Activated T-helper 2 cell treated with anti-CD3 and anti-CD28 coated beads, Interferon-gamma antibody, Interleukin-2, Interleukin-4, amounts not matched to agents 10 μg/mL and 5 μg/mL and 100 μg/mL, durations not matched to agents 14 hours and 24 hours and 36 hours (primary cell): ENCODE measurements at regions of chr14 and their contacts with region 1.

Region 1: GRCh38 chr14:53152890-53153701 is at the start of gene DDHD1:
- DNase-seq: peak; percentile 82
- H3K4me3 Mint-ChIP-seq: peak within 1 kb of the TSS; percentile 99
- H3K27ac Mint-ChIP-seq: peak within 1 kb of the TSS; percentile 100
- H3K4me1 Mint-ChIP-seq: peaks cover 45% of the 10 kb centered on the region
- H3K27me3 Mint-ChIP-seq: no peaks in the 10 kb centered on the region
- total RNA-seq, gene DDHD1: 53.7 and 54.6 TPM in 2 replicates

Region 2: GRCh38 chr14:53055003-53055402 is 98.1 kb before region 1 on chr14:
- intact Hi-C with region 1: loop called (anchors 5 kb)
- DNase-seq: no peak
- H3K4me3 Mint-ChIP-seq: no peak overlapping the region
- H3K27ac Mint-ChIP-seq: no peak overlapping the region
- H3K4me1 Mint-ChIP-seq: peaks cover 9% of the 10 kb centered on the region
- H3K27me3 Mint-ChIP-seq: no peaks in the 10 kb centered on the region

Region 3: GRCh38 chr14:53180268-53181221 is 27.4 kb after region 1 on chr14:
- intact Hi-C with region 1: loop called (anchors 1 kb)
- DNase-seq: no peak
- H3K4me3 Mint-ChIP-seq: no peak overlapping the region
- H3K27ac Mint-ChIP-seq: peak overlapping the region; percentile 40
- H3K4me1 Mint-ChIP-seq: peaks cover 26% of the 10 kb centered on the region
- H3K27me3 Mint-ChIP-seq: peaks cover 1% of the 10 kb centered on the region

Region 4: DNA sequence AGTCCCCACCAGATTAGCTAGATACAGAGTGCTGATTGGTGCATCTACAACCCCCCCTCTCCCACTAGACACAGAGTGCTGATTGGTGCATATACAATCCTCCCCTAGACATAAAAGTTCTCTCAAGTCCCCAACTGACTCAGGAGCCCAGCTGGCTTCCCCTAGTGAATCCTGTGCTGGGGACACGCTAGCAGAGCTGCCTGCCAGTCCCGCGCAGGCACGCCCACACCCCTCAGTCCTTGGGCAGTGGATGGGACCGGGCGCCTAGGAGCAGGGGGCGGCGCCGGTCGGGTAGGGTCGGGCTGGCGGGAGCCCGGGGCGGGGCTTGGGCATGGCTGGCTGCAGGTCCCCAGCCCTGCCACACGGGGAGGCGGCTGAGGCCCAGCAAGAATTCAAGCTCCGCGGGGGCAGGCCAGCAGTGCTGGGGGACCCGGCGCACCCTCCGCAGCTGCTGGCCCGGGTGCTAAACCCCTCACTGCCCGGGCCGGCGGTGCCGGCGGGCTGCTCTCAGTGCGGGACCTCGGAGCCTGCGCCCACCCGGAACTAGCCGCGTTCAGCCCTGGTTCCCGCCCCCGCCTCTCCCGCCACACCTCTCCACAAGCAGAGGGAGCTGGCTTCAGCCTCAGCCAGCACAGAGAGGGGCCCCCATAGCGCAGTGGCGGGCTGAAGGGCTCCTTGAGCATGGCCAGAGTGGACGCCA is 64.3 kb after region 1 on chr14:
- intact Hi-C with region 1: loop called (anchors 1 kb)
- DNase-seq: peak; percentile 78
- H3K4me3 Mint-ChIP-seq: peak overlapping the region; percentile 83
- H3K27ac Mint-ChIP-seq: peak overlapping the region; percentile 77
- H3K4me1 Mint-ChIP-seq: peaks cover 21% of the 10 kb centered on the region
- H3K27me3 Mint-ChIP-seq: no peaks in the 10 kb centered on the region